GM12878 (cell line): ENCODE measurements at regions of chr1 and their contacts with region 1.

Region 1: DNA sequence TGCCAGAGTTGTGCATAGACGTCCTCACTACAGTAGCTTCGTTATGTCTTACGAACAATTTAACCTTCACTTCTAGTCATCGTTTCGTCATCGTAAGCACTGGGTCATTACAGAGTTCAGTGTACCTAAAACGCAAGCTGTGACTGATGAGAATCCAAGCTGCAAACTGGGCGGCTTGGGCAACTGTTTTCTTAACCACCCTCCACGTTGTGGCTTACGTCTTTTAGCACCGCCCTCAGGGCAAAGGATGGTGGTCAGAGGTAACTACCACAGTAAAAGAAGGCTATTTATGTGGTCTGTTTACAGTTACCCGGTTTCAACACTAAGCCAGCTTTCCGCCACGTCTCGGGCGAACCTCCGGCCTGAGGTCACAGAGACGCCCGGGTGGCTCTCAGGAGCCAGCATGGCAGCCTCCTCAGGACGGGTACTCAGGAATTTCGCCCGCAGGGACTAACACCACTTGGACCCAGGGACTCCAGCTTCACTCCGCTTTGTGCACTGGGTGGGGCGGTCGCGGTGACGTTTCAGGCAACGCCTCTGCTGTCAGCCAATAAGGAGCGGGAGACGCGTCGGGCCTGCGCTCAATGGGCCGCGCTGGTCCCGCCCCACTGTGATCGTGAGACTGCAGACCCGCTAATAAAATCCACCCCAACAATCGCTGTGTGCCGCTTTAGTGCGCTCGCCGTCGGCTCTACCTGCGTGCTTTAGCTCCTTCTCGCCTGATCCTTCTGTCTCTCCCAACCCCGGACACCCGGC is at the start of gene CTH:
- DNase-seq: peak; percentile 77
- ATAC-seq: peak; percentile 95
- H3K4me3 ChIP-seq: peak within 1 kb of the TSS; percentile 85
- H3K27ac ChIP-seq: peak within 1 kb of the TSS; percentile 74
- H3K4me1 ChIP-seq: peaks cover 25% of the 10 kb centered on the region
- H3K27me3 ChIP-seq: no peaks in the 10 kb centered on the region
- CTCF ChIP-seq: no peak
- EP300 ChIP-seq: no peak
- POLR2A ChIP-seq: peak; percentile 97
- RAD21 ChIP-seq: no peak
- polyA plus RNA-seq, gene CTH: 9.8 to 12.5 TPM

Region 2: GRCh38 chr1:70205434-70206118 is 205.2 kb before region 1 on chr1 and contains the start of gene LRRC40:
- CTCF ChIA-PET with region 1: interaction called, 5 read pairs
- POLR2A ChIA-PET with region 1: interaction called, 3 read pairs
- RAD21 ChIA-PET with region 1: no interaction called
- SMC1A ChIA-PET with region 1: interaction called, 4 read pairs
- in situ Hi-C with region 1: no loop called
- intact Hi-C with region 1: loop called (anchors 10 kb)
- DNase-seq: peak; percentile 84
- ATAC-seq: peak; percentile 83
- H3K4me3 ChIP-seq: peak within 1 kb of the TSS; percentile 83
- H3K27ac ChIP-seq: peak within 1 kb of the TSS; percentile 74
- H3K4me1 ChIP-seq: peaks cover 11% of the 10 kb centered on the region
- H3K27me3 ChIP-seq: no peaks in the 10 kb centered on the region
- CTCF ChIP-seq: no peak
- EP300 ChIP-seq: no peak
- POLR2A ChIP-seq: peak; percentile 82
- RAD21 ChIP-seq: no peak
- polyA plus RNA-seq, gene LRRC40: 26.1 to 44.3 TPM

Region 3: GRCh38 chr1:70247768-70248167 is 163.0 kb before region 1 on chr1:
- CTCF ChIA-PET with region 1: interaction called, 5 read pairs
- POLR2A ChIA-PET with region 1: interaction called, 11 read pairs
- RAD21 ChIA-PET with region 1: interaction called, 4 read pairs
- SMC1A ChIA-PET with region 1: no interaction called
- in situ Hi-C with region 1: no loop called
- intact Hi-C with region 1: no loop called
- DNase-seq: no peak
- ATAC-seq: no peak
- H3K4me3 ChIP-seq: no peak overlapping the region
- H3K27ac ChIP-seq: no peak overlapping the region
- H3K4me1 ChIP-seq: no peaks in the 10 kb centered on the region
- H3K27me3 ChIP-seq: no peaks in the 10 kb centered on the region
- CTCF ChIP-seq: no peak
- EP300 ChIP-seq: no peak
- POLR2A ChIP-seq: no peak
- RAD21 ChIP-seq: no peak

Region 4: DNA sequence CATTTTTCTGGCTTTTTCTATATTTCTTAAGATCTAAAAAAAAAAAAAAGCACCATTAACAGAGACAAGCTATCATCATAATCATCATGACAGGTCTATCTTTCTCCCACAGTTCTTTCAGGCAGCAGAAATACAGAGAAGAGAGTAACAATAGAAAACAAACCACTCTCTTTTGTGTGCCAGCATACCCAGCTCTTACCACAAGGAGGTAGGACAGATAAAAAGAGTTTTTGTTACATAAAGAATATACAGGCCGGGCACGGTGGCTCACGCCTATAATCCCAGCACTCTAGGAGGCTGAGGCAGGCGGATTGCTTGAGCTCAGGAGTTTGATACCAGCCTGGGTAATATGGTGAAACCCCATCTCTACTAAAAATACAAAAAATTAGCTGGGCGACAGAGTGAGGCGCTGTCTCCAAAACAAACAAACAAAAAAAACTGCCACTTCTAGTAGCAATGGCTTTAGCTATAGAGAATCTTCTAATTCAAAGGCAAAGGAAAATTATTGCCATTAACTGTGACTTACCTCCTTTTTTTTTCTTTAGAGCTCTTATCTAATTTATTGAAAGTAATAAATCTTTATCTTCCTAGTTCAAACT is 96.0 kb before region 1 on chr1:
- CTCF ChIA-PET with region 1: interaction called, 5 read pairs
- POLR2A ChIA-PET with region 1: no interaction called
- RAD21 ChIA-PET with region 1: interaction called, 15 read pairs
- SMC1A ChIA-PET with region 1: interaction called, 11 read pairs
- in situ Hi-C with region 1: no loop called
- intact Hi-C with region 1: no loop called
- DNase-seq: no peak
- ATAC-seq: no peak
- H3K4me3 ChIP-seq: no peak overlapping the region
- H3K27ac ChIP-seq: no peak overlapping the region
- H3K4me1 ChIP-seq: no peaks in the 10 kb centered on the region
- H3K27me3 ChIP-seq: no peaks in the 10 kb centered on the region
- CTCF ChIP-seq: no peak
- EP300 ChIP-seq: no peak
- POLR2A ChIP-seq: no peak
- RAD21 ChIP-seq: no peak

Region 5: DNA sequence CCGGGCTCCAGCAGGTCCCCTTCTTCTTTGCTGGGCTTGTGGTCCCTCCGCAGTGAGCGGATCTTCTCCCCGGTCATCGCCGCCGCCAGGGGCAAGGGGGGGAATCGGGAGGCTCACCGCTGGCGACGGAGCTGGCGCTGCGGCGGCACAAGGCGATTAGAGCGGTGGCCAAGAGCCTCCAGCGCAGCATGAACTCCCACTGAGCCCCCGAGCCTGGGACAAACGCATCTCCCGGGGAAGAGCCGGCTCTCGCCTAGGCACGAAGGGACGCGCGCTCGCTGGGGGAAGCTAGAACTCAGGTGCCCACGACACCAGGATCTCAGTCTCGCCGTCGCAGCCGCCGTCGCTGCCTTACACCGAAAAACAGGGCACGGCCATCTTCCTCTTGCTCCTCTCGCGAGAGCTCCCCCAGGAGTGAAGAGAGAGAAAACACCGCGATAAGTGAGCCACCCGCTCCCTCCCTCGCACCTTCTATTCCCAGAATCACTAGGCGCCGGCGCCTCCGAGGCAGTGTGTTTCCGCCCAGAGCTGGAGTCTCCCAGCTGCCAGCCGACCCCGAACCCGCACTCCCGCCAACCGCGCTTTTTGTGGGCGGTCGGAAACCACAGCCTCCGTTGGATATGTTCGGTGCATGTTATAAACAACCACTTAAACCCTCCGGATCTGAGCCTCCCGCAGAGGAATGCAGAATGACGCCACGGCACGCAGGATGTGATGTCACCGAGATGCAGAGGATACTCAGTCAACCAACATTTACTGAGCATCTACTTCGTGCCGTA is 56.3 kb before region 1 on chr1 and contains the start of gene ANKRD13C:
- CTCF ChIA-PET with region 1: interaction called, 6 read pairs
- POLR2A ChIA-PET with region 1: interaction called, 32 read pairs
- RAD21 ChIA-PET with region 1: interaction called, 23 read pairs
- SMC1A ChIA-PET with region 1: interaction called, 16 read pairs
- in situ Hi-C with region 1: loop called (anchors 5 kb)
- intact Hi-C with region 1: loop called (anchors 2 kb)
- DNase-seq: peak; percentile 83
- ATAC-seq: peak; percentile 89
- H3K4me3 ChIP-seq: peak within 1 kb of the TSS; percentile 88
- H3K27ac ChIP-seq: peak within 1 kb of the TSS; percentile 90
- H3K4me1 ChIP-seq: peaks cover 12% of the 10 kb centered on the region; the same call in 1 of the 2 replicates
- H3K27me3 ChIP-seq: no peaks in the 10 kb centered on the region
- CTCF ChIP-seq: peak in 2 of 3 experiments; percentile 7 to 26; a peak in 1 of 6 replicates
- EP300 ChIP-seq: 0 out of 4 replicates have a peak, but pooled peaks of 1 of the 2 experiments have one; percentile 11
- POLR2A ChIP-seq: peak; percentile 97
- RAD21 ChIP-seq: no peak
- polyA plus RNA-seq, gene ANKRD13C: 3.7 to 5.1 TPM

Region 6: GRCh38 chr1:70504176-70504820 is 93.5 kb after region 1 on chr1:
- CTCF ChIA-PET with region 1: interaction called, 5 read pairs
- POLR2A ChIA-PET with region 1: interaction called, 3 read pairs
- RAD21 ChIA-PET with region 1: interaction called, 5 read pairs
- SMC1A ChIA-PET with region 1: interaction called, 3 read pairs
- in situ Hi-C with region 1: no loop called
- intact Hi-C with region 1: loop called (anchors 5 kb)
- DNase-seq: peak; percentile 56
- ATAC-seq: peak; percentile 95
- H3K4me3 ChIP-seq: no peak overlapping the region
- H3K27ac ChIP-seq: no peak overlapping the region
- H3K4me1 ChIP-seq: peaks cover 5% of the 10 kb centered on the region; the same call in 1 of the 2 replicates
- H3K27me3 ChIP-seq: no peaks in the 10 kb centered on the region
- CTCF ChIP-seq: no peak
- EP300 ChIP-seq: peak; percentile 89 to 97
- POLR2A ChIP-seq: no peak
- RAD21 ChIP-seq: no peak

Region 7: DNA sequence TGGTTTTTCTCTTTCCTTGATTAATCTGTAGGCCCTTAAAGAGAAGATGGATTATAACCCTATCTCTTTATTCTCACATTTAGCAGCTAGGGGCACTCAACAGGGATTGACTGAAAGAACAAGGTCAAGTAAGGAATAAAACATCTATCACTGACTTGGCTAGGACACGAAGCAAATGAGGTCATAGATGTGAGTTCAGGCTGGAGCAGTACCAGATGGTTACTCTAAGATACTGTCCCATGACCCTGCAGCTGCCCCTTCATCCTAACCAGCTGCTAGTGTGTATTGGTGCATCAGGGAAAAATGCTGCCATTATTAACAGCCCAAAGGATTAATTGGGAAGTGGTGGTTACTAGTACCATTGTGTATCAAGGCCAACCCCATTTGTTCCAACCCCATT is 222.2 kb after region 1 on chr1:
- CTCF ChIA-PET with region 1: no interaction called
- POLR2A ChIA-PET with region 1: no interaction called
- RAD21 ChIA-PET with region 1: no interaction called
- SMC1A ChIA-PET with region 1: no interaction called
- in situ Hi-C with region 1: no loop called
- intact Hi-C with region 1: no loop called
- DNase-seq: no peak
- ATAC-seq: no peak
- H3K4me3 ChIP-seq: no peak overlapping the region
- H3K27ac ChIP-seq: no peak overlapping the region
- H3K4me1 ChIP-seq: no peaks in the 10 kb centered on the region
- H3K27me3 ChIP-seq: no peaks in the 10 kb centered on the region
- CTCF ChIP-seq: no peak
- EP300 ChIP-seq: no peak
- POLR2A ChIP-seq: no peak
- RAD21 ChIP-seq: no peak